Ovary (tissue), 10 donors: ENCODE measurements at regions of chr1 and their contacts with region 1.

Region 1: DNA sequence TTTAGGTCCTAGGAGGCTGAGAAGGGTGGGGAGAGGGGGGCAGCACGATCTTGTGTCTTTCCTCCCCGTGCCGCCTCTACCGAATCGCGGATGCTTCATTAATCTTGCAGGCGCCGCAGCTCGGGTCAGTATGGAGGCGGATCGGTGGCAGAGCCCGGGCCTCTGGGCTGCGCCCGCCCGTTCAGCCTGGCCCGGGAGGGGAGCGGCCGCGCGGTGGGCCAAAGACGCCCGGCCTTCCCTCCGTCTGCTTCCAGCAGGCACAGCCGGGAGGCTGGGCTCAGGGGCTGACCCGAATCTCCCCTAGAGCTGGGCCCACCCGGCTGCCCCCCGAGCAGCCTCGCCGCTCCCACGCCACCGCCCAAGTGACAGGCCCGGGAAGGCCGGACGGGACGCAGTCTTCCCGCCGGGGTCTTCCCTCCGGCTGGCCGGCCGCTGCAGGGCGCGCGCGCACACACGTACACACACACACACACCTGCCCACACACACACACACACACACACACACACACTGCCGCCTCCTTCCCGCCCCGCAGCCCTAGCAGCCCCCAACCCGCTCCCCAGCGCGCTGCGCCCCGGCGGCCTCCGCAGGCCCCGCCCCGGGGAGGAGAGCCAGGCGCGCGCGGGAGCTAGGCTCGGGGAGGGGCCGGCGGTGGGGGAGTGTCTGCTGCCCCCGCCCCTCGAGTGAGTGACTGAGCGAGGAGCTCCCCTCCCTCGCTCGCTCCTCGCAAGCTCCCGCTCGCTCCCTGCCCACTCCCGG is at the start of gene C1orf21:
- DNase-seq: peak; percentile 91 to 93 (median 92)
- H3K4me3 ChIP-seq: peak within 1 kb of the TSS; percentile 94
- H3K27ac ChIP-seq: peak within 1 kb of the TSS; percentile 69 to 84
- H3K4me1 ChIP-seq: peaks cover 3% of the 10 kb centered on the region
- H3K27me3 ChIP-seq: no peaks in the 10 kb centered on the region
- CTCF ChIP-seq: no peak
- EP300 ChIP-seq: no peak
- POLR2A ChIP-seq: peak; percentile 84
- total RNA-seq, gene C1orf21: 26.2 to 64.9 (median 59.4) TPM

Region 2: DNA sequence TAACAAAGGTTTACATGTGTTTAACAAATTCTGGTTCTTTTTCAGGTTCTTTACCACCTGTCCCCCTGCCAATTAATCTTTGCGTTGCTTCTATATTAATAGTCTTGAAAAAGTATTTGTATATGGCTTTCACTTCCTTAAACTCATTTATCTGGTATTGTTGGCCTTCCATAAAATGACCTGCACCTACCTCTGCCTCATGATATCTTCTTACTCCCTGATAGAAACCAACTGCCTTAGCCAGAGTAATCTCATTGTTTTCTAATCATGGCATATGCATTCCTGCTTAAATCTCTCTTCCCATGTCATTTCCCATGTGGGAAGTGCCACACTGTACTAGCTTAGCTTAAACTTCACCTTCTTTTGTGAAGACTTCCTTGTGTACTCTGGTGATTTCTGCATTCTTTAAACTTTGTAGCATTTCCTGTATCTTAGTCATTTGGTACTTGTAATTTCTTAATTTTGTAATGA is 905.5 kb before region 1 on chr1:
- intact Hi-C with region 1: no loop called
- DNase-seq: no peak
- H3K4me3 ChIP-seq: no peak overlapping the region
- H3K27ac ChIP-seq: no peak overlapping the region
- H3K4me1 ChIP-seq: no peaks in the 10 kb centered on the region
- H3K27me3 ChIP-seq: no peaks in the 10 kb centered on the region
- CTCF ChIP-seq: no peak
- EP300 ChIP-seq: no peak
- POLR2A ChIP-seq: no peak

Region 3: GRCh38 chr1:184270556-184270955 is 115.9 kb before region 1 on chr1:
- intact Hi-C with region 1: no loop called
- DNase-seq: no peak
- H3K4me3 ChIP-seq: no peak overlapping the region
- H3K27ac ChIP-seq: no peak overlapping the region
- H3K4me1 ChIP-seq: no peaks in the 10 kb centered on the region
- H3K27me3 ChIP-seq: no peaks in the 10 kb centered on the region
- CTCF ChIP-seq: no peak
- EP300 ChIP-seq: no peak
- POLR2A ChIP-seq: no peak

Region 4: GRCh38 chr1:184555665-184556641 is 169.5 kb after region 1 on chr1:
- intact Hi-C with region 1: loop called in 3 of 4 experiments (anchors 5 to 10 kb)
- DNase-seq: no peak
- H3K4me3 ChIP-seq: no peak overlapping the region
- H3K27ac ChIP-seq: no peak overlapping the region
- H3K4me1 ChIP-seq: peaks cover 1% of the 10 kb centered on the region
- H3K27me3 ChIP-seq: no peaks in the 10 kb centered on the region
- CTCF ChIP-seq: no peak
- EP300 ChIP-seq: no peak
- POLR2A ChIP-seq: no peak